ENCODE measurements at regions of chr5 and their contacts with region 1.

Region 1: DNA sequence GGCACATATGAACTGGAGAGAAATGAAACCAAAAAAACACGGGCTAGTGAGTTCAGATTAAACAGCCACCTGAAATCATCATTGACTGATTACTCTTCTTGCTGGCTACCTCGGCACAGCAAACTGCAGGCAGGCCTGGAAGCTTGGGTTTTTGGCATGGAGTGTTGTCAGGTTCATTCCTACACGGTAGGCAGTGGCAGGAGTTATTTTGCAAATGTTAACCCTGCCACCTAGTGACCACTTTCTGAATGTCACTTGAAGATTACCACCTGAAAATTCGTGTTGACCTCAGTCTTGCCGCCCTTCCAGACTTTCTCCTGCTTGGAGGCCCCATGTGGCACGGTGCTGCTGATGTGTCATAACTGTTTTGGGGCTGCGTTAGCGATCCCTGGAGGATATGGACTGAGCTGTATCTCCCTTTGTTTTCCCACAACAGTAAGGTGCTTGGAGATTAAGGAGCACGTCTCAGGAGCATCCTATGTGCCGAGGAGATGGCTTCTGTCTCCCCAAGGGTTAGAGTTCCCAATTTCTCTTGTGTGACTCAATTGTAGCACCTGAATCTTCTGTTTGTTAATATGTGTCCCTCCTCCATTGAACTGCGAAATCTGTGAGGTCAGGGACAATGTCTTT is 12.7 kb upstream of the CD180 start:
- DNase-seq: peak; percentile 72
- H3K4me3 Mint-ChIP-seq: no peak overlapping the region
- H3K27ac Mint-ChIP-seq: peak overlapping the region; percentile 70
- H3K4me1 Mint-ChIP-seq: peaks cover 71% of the 10 kb centered on the region
- H3K27me3 Mint-ChIP-seq: no peaks in the 10 kb centered on the region

Region 2: DNA sequence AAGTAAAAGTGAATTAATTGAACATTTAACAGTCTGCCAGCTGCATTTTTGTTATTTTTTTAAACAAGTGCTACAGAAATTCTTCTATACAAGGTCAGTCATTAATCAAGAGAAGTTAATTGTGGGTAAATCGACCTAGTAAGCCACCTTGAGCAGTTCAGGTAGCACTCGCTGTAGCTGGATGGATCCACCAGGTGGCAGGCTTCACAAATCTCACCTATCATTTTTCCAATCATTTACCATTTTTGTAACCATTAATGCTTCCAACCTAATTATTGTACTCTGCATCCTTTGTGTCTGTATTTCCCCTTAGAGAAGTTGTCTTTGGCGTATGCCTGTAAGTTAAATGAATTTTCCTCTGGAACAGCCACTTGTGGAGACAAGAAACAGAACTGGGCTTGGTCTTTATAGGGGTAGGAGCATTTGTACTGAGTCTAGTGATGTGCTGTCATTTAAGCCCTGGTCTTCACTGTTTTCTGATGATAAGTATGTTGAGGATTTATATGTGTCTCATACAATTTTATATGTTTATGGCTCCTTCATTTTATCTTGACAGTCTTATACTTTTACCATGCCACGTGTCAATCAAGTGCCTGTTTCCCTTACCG is 52.2 kb before region 1 on chr5:
- CTCF ChIA-PET with region 1: interaction called, 161 read pairs
- DNase-seq: peak; percentile 64
- H3K4me3 Mint-ChIP-seq: no peak overlapping the region
- H3K27ac Mint-ChIP-seq: peak overlapping the region; percentile 34
- H3K4me1 Mint-ChIP-seq: peaks cover 57% of the 10 kb centered on the region
- H3K27me3 Mint-ChIP-seq: no peaks in the 10 kb centered on the region

Region 3: DNA sequence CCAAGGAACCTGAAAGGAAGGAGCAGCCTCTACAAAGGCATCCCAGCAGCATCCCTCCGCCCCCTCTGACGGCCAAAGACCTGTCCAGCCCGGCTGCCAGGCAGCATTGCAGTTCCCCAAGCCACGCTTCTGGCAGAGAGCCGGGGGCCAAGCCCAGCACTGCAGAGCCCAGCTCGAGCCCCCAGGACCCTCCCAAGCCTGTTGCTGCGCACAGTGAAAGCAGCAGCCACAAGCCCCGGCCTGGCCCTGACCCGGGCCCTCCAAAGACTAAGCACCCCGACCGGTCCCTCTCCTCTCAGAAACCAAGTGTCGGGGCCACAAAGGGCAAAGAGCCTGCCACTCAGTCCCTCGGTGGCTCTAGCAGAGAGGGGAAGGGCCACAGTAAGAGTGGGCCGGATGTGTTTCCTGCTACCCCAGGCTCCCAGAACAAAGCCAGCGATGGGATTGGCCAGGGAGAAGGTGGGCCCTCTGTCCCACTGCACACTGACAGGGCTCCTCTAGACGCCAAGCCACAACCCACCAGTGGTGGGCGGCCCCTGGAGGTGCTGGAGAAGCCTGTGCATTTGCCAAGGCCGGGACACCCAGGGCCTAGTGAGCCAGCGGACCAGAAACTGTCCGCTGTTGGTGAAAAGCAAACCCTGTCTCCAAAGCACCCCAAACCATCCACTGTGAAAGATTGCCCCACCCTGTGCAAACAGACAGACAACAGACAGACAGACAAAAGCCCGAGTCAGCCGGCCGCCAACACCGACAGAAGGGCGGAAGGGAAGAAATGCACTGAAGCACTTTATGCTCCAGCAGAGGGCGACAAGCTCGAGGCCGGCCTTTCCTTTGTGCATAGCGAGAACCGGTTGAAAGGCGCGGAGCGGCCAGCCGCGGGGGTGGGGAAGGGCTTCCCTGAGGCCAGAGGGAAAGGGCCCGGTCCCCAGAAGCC is 43.5 kb before region 1 on chr5:
- CTCF ChIA-PET with region 1: interaction called, 161 read pairs
- DNase-seq: peak; percentile 93
- H3K4me3 Mint-ChIP-seq: peak overlapping the region; percentile 82
- H3K27ac Mint-ChIP-seq: peak overlapping the region; percentile 95
- H3K4me1 Mint-ChIP-seq: peaks cover 68% of the 10 kb centered on the region
- H3K27me3 Mint-ChIP-seq: no peaks in the 10 kb centered on the region

Region 4: DNA sequence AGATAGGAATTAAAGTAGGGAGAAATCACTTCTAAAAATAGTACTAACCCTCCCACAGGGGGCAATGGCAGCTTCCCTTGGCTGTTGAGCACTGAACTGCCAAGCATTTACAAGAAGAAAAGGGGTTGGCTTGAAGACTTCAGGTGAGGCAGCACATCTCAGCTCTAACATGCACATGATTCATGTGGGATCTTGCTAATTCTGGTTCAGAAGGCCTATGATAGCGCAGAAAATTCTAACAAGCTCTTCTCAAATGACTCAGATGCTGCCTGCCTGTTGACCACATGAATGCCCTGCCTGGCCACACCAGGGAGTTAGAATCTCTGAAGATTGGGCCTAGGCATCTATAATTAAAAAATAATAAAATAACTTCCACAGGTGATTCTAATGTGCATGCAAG is 35.3 kb before region 1 on chr5:
- CTCF ChIA-PET with region 1: interaction called, 161 read pairs
- DNase-seq: no peak
- H3K4me3 Mint-ChIP-seq: no peak overlapping the region
- H3K27ac Mint-ChIP-seq: no peak overlapping the region
- H3K4me1 Mint-ChIP-seq: peaks cover 30% of the 10 kb centered on the region
- H3K27me3 Mint-ChIP-seq: no peaks in the 10 kb centered on the region

Region 5: DNA sequence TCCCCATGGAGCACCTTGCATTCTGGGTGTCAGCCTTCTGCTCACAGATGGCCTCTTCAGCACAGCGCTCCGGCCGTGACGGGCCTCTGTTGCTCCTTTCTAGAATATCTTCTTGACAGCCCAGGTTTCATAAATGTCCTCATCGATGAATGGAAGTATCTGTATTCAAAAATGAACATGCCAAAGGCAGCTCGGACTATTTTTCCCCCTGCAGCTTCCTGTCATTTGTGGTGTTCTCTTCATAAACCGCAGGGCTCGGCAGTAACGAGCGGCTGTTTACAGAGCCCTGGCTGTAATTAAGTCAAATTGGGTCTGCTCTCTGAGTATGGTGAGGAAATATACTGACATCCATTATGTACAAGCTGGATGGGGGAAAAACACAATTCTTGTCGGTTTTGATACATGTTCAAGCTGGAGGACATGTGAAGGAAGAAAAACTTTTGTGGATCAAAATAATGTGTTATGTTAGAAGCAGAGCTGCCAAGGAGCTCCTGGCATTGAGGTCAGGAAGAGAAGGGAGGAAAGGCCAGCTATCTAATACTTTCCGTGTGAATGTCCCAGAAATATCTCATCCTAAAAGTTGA is 141.5 kb after region 1 on chr5:
- CTCF ChIA-PET with region 1: no interaction called
- DNase-seq: peak; percentile 37
- H3K4me3 Mint-ChIP-seq: peak overlapping the region; percentile 37
- H3K27ac Mint-ChIP-seq: no peak overlapping the region
- H3K4me1 Mint-ChIP-seq: peaks cover 12% of the 10 kb centered on the region
- H3K27me3 Mint-ChIP-seq: peaks cover 6% of the 10 kb centered on the region